K562 (cell line): ENCODE measurements at regions of chr2 and their contacts with region 1.

Region 1: GRCh38 chr2:85988175-85988913 is 99.6 kb upstream of the ST3GAL5 start:
- DNase-seq: peak in 1 of 4 experiments; percentile 53
- ATAC-seq: peak; percentile 61
- H3K4me3 ChIP-seq: no peak overlapping the region
- H3K27ac ChIP-seq: peak overlapping the region; percentile 43; the same call in 1 of the 3 replicates
- H3K4me1 ChIP-seq: peaks cover 30 to 39% of the 10 kb centered on the region in 2 experiments
- H3K27me3 ChIP-seq: no peaks in the 10 kb centered on the region
- CTCF ChIP-seq: no peak
- EP300 ChIP-seq: no peak
- POLR2A ChIP-seq: no peak
- RAD21 ChIP-seq: no peak

Region 2: GRCh38 chr2:85920810-85921545 is 67.4 kb before region 1 on chr2:
- CTCF ChIA-PET with region 1: no interaction called
- POLR2A ChIA-PET with region 1: no interaction called
- in situ Hi-C with region 1: no loop called
- intact Hi-C with region 1: loop called (anchors 1 kb)
- DNase-seq: peak in 1 of 4 experiments; percentile 24
- ATAC-seq: peak; percentile 21
- H3K4me3 ChIP-seq: no peak overlapping the region
- H3K27ac ChIP-seq: no peak overlapping the region
- H3K4me1 ChIP-seq: peaks cover 0 to 18% of the 10 kb centered on the region in 2 experiments; a peak in 4 of 5 replicates
- H3K27me3 ChIP-seq: no peaks in the 10 kb centered on the region; a peak in 1 of 5 replicates
- CTCF ChIP-seq: no peak
- EP300 ChIP-seq: no peak
- POLR2A ChIP-seq: no peak
- RAD21 ChIP-seq: no peak